Activated CD8-positive, alpha-beta T cell treated with anti-CD3 and anti-CD28 coated beads for 36 hours (primary cell): ENCODE measurements at regions of chr1 and their contacts with region 1.

Region 1: GRCh38 chr1:109984456-109985275 is at the start of gene AHCYL1:
- DNase-seq: peak; percentile 100
- ATAC-seq: peak; percentile 99
- H3K4me3 Mint-ChIP-seq: peak within 1 kb of the TSS; percentile 98
- H3K27ac Mint-ChIP-seq: peak within 1 kb of the TSS; percentile 98
- H3K4me1 Mint-ChIP-seq: peaks cover 33% of the 10 kb centered on the region
- H3K27me3 Mint-ChIP-seq: no peaks in the 10 kb centered on the region
- CTCF ChIP-seq: peak; percentile 84
- total RNA-seq, gene AHCYL1: 77.8 to 79.1 TPM

Region 2: DNA sequence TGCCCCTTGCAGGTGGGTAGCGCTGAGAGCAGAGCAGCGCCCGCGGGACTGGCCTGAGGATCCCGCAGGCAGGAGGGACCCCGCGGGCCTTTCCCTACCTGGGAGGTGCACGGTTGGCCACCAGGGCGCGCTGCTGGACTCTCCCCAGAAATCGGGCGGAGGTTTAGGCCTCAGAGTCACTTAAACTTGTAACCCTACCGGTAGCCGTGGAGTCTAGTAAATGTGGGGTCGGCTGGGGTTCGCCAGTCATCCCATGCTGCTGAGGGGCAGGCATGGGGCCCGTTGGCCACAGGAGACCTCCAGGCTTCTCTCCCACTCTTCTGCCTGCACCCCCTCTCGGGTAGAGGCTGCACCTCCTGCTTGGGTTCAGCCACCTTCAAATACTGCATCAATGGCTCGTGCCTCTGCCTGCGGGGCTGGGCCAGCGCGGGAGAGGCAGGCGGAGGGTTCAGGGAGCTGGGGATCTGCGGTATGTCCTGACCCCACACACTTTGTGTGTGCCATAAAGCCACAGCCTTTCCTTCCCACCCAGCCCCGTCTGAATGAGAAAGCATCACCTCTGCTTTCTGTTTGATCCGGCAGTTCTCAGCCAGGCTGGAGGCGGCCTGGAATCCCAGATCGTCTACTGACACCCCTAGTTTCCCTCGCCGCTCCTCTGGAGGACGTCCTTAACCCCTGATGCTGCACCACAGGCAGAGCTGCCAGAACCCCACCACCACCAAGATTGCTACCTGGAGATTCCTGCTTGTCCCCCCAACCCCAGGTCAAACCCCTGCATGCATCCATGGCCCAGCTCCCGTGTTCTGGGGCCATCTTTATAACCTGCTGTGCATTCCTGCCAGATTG is 341.1 kb before region 1 on chr1:
- CTCF ChIA-PET with region 1: interaction called, 69 read pairs
- POLR2A ChIA-PET with region 1: interaction called, 3 read pairs
- intact Hi-C with region 1: loop called (anchors 5 kb)
- DNase-seq: peak; percentile 94
- ATAC-seq: peak; percentile 95
- H3K4me3 Mint-ChIP-seq: no peak overlapping the region
- H3K27ac Mint-ChIP-seq: no peak overlapping the region
- H3K4me1 Mint-ChIP-seq: peaks cover 7% of the 10 kb centered on the region
- H3K27me3 Mint-ChIP-seq: peaks cover 1% of the 10 kb centered on the region
- CTCF ChIP-seq: peak; percentile 88

Region 3: DNA sequence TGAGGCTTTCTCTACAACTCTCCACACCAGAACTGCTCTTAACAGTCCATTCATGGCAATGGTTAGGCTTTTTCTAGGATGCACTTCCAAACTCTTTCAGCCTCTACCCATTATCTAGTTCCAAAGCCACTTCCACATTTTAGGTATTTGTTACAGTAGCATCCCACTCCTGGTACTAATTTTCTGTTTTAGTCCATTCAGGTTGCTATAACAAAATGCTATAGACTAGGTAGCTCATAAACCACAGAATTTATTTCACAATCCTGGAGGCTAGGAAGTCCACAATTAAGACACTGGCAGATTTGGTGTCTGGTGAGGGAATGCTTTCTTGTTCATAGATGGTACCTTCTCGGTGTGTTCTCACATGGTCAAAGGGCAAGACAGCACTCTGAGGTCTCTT is 203.7 kb before region 1 on chr1:
- CTCF ChIA-PET with region 1: interaction called, 745 read pairs
- POLR2A ChIA-PET with region 1: interaction called, 45 read pairs
- intact Hi-C with region 1: loop called (anchors 1 kb)
- DNase-seq: no peak
- ATAC-seq: no peak
- H3K4me3 Mint-ChIP-seq: no peak overlapping the region
- H3K27ac Mint-ChIP-seq: no peak overlapping the region
- H3K4me1 Mint-ChIP-seq: no peaks in the 10 kb centered on the region
- H3K27me3 Mint-ChIP-seq: no peaks in the 10 kb centered on the region
- CTCF ChIP-seq: no peak

Region 4: GRCh38 chr1:109832945-109833344 is 151.7 kb before region 1 on chr1:
- CTCF ChIA-PET with region 1: interaction called, 16 read pairs
- POLR2A ChIA-PET with region 1: no interaction called
- intact Hi-C with region 1: no loop called
- DNase-seq: no peak
- ATAC-seq: no peak
- H3K4me3 Mint-ChIP-seq: no peak overlapping the region
- H3K27ac Mint-ChIP-seq: no peak overlapping the region
- H3K4me1 Mint-ChIP-seq: no peaks in the 10 kb centered on the region
- H3K27me3 Mint-ChIP-seq: no peaks in the 10 kb centered on the region
- CTCF ChIP-seq: no peak

Region 5: DNA sequence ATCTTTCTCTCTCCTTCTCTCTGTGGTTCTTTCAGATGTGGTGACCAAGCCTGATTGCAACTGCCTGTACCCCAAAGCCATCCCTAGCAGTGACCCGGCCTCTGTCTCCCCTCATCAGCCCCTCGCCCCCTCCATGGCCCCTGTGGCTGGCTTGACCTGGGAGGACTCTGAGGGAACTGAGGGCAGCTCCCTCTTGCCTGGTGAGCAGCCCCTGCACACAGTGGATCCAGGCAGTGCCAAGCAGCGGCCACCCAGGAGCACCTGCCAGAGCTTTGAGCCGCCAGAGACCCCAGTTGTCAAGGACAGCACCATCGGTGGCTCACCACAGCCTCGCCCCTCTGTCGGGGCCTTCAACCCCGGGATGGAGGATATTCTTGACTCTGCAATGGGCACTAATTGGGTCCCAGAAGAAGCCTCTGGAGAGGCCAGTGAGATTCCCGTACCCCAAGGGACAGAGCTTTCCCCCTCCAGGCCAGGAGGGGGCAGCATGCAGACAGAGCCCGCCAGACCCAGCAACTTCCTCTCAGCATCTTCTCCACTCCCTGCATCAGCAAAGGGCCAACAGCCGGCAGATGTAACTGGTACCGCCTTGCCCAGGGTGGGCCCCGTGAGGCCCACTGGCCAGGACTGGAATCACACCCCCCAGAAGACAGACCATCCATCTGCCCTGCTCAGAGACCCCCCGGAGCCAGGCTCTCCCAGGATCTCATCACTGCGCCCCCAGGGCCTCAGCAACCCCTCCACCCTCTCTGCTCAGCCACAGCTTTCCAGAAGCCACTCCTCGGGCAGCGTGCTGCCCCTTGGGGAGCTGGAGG is 61.3 kb before region 1 on chr1:
- CTCF ChIA-PET with region 1: interaction called, 20 read pairs
- POLR2A ChIA-PET with region 1: interaction called, 6 read pairs
- intact Hi-C with region 1: no loop called
- DNase-seq: peak; percentile 31
- ATAC-seq: peak; percentile 68
- H3K4me3 Mint-ChIP-seq: peak overlapping the region; percentile 25
- H3K27ac Mint-ChIP-seq: no peak overlapping the region
- H3K4me1 Mint-ChIP-seq: no peaks in the 10 kb centered on the region
- H3K27me3 Mint-ChIP-seq: no peaks in the 10 kb centered on the region
- CTCF ChIP-seq: peak; percentile 48

Region 6: DNA sequence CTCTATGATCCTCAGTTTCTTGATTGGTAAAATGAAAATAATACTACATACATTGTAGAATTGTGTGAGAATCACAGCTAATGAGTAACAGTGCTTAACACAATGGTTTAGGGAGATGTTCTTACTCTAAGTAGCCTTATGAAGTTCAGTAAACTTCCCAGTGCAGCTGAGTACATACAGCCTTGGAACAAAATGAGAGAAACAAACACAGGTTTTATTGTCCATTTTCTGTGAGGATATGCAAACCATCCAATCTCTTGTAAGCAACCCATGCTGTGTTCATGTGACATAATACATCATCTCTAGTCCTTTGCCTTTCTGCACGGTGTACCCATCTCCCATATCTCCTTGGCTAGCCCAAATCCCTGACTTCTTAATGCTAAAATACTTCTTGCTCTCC is 35.1 kb after region 1 on chr1:
- CTCF ChIA-PET with region 1: interaction called, 17 read pairs
- POLR2A ChIA-PET with region 1: interaction called, 6 read pairs
- intact Hi-C with region 1: no loop called
- DNase-seq: no peak
- ATAC-seq: no peak
- H3K4me3 Mint-ChIP-seq: no peak overlapping the region
- H3K27ac Mint-ChIP-seq: no peak overlapping the region
- H3K4me1 Mint-ChIP-seq: no peaks in the 10 kb centered on the region
- H3K27me3 Mint-ChIP-seq: no peaks in the 10 kb centered on the region
- CTCF ChIP-seq: no peak